Left ventricle myocardium inferior (tissue), 1 donor: ENCODE measurements at regions of chr6 and their contacts with region 1.

Region 1: GRCh38 chr6:56851541-56852259 is 103.2 kb upstream of the BEND6 start:
- DNase-seq: no peak
- H3K4me3 ChIP-seq: peak overlapping the region; percentile 66
- H3K27ac ChIP-seq: peak overlapping the region; percentile 75
- H3K4me1 ChIP-seq: peaks cover 39% of the 10 kb centered on the region
- H3K27me3 ChIP-seq: no peaks in the 10 kb centered on the region
- CTCF ChIP-seq: peak; percentile 71

Region 2: GRCh38 chr6:56359201-56359899 is 492.4 kb before region 1 on chr6:
- intact Hi-C with region 1: loop called (anchors 10 kb)
- DNase-seq: no peak
- H3K4me3 ChIP-seq: no peak overlapping the region
- H3K27ac ChIP-seq: no peak overlapping the region
- H3K4me1 ChIP-seq: peaks cover 19% of the 10 kb centered on the region
- H3K27me3 ChIP-seq: no peaks in the 10 kb centered on the region
- CTCF ChIP-seq: peak; percentile 89

Region 3: GRCh38 chr6:56499095-56499494 is 352.6 kb before region 1 on chr6:
- intact Hi-C with region 1: no loop called
- DNase-seq: no peak
- H3K4me3 ChIP-seq: no peak overlapping the region
- H3K27ac ChIP-seq: peak overlapping the region; percentile 43
- H3K4me1 ChIP-seq: peaks cover 30% of the 10 kb centered on the region
- H3K27me3 ChIP-seq: no peaks in the 10 kb centered on the region
- CTCF ChIP-seq: no peak

Region 4: GRCh38 chr6:56637640-56638039 is 214.1 kb before region 1 on chr6:
- intact Hi-C with region 1: loop called (anchors 5 kb)
- DNase-seq: no peak
- H3K4me3 ChIP-seq: no peak overlapping the region
- H3K27ac ChIP-seq: peak overlapping the region; percentile 7
- H3K4me1 ChIP-seq: peaks cover 9% of the 10 kb centered on the region
- H3K27me3 ChIP-seq: no peaks in the 10 kb centered on the region
- CTCF ChIP-seq: peak; percentile 82

Region 5: DNA sequence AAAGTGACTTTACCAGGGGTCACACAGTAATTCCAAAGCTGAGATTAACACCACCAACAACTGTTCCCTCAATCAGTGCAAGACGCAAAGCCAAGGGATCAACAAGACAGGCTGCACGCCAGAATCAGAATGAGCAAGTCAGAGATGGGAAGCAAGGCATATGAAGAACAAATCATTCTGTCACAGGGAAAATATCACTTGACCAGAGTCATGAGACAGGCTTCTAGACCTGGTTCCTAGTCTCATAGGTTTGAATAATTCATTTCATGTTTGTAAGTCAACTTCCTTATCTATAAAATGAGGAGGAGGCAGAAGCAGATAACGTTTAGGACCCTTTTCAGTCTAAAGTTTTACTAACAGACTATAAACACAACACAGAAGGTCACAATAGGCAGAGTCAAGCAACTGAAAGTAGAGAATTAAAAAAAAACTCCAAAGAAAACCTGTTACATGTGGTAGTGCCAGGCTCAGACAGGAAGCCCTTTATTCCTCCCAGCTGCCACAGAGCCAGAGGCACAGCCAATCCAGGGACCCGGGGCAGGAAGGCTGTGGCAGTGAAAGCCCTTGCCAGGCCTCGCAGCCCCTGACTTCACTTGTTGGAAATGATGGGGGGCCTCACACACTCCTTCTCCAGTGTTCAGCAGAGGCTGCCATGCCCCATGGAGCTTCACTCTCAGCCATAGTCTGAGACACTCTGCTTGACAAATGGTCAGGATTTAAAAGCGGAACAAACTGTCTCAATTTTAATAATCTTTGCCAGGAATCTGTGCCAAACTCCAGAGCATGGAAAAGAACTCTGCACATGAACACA is 179.8 kb before region 1 on chr6:
- intact Hi-C with region 1: no loop called
- DNase-seq: no peak
- H3K4me3 ChIP-seq: peak overlapping the region; percentile 9
- H3K27ac ChIP-seq: peak overlapping the region; percentile 86
- H3K4me1 ChIP-seq: peaks cover 60% of the 10 kb centered on the region
- H3K27me3 ChIP-seq: no peaks in the 10 kb centered on the region
- CTCF ChIP-seq: no peak

Region 6: DNA sequence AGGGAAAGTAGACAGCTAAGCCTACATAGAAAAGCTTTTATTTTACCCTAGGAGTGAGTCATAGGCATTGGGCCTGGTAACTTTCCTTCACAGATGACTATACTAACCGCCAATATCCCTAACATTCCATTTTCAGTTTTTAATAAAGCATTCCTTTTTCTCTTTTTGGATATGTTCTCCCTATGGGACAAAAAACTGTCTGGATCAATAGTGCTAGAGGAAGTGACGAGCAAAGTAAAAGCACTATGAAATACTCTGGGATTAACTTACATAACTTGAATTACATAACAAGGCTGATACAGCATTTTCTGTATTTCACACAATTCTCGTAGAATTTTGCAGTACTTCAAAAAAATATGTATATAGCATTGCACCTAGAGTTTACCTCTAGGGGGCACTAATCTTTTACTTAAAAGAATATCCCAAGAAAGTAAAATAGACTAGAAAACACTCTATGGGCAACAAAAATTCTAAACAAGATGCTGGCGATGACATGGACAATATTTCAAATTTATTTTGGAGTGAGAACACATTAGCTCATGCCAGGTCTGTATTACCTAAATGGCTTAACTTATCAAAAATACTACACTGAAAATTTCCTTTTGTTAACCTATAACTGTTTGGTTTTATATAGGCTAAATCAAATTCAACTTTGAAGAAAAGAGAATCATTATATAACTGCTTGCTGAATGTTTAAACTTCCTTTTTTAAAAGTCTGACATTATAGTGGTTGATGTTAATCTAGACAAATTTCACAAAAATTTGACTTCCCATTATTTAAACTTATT is 142.7 kb before region 1 on chr6:
- intact Hi-C with region 1: loop called (anchors 2 kb)
- DNase-seq: no peak
- H3K4me3 ChIP-seq: no peak overlapping the region
- H3K27ac ChIP-seq: peak overlapping the region; percentile 61
- H3K4me1 ChIP-seq: peaks cover 50% of the 10 kb centered on the region
- H3K27me3 ChIP-seq: no peaks in the 10 kb centered on the region
- CTCF ChIP-seq: peak; percentile 77